Transverse colon (tissue), 4 donors: ENCODE measurements at regions of chr17 and their contacts with region 1.

Region 1: GRCh38 chr17:27506348-27507231 is 50.3 kb downstream of the KSR1 start:
- DNase-seq: no peak
- H3K4me3 ChIP-seq: no peak overlapping the region
- H3K27ac ChIP-seq: no peak overlapping the region
- H3K4me1 ChIP-seq: peaks cover 0 to 14% (median 13%) of the 10 kb centered on the region in 4 donors
- H3K27me3 ChIP-seq: no peaks in the 10 kb centered on the region
- CTCF ChIP-seq: no peak
- EP300 ChIP-seq: no peak
- POLR2A ChIP-seq: no peak

Region 2: DNA sequence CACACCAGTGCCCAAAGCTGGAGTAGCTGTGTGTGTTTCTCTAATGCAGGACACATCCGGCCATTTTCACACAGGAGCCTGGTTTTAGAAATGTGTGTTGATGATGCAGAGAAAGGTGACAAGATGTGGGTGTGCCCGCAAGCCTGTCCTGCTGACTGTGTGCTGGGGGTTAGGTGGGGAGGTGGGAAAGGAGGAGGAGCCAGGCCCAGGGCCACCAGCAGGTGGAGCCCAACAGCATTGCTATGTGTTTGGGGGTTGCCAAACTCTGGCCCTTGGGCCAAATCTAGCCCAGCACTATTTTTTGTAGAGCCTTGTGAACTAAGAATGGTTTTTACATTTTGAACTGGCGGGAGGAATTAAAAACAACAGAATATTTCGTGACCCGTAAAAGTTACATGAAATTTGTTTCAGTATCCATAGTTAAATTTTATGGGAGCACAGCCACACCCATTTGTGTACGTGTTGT is 62.7 kb after region 1 on chr17:
- in situ Hi-C with region 1: loop called in 1 of 4 experiments (anchors 10 kb)
- intact Hi-C with region 1: no loop called
- DNase-seq: no peak
- H3K4me3 ChIP-seq: no peak overlapping the region
- H3K27ac ChIP-seq: no peak overlapping the region
- H3K4me1 ChIP-seq: peaks cover 0 to 14% (median 7%) of the 10 kb centered on the region in 4 donors
- H3K27me3 ChIP-seq: no peaks in the 10 kb centered on the region
- CTCF ChIP-seq: peak in 4 of 5 experiments; percentile 17 to 38 (median 31)
- EP300 ChIP-seq: no peak
- POLR2A ChIP-seq: no peak

Region 3: DNA sequence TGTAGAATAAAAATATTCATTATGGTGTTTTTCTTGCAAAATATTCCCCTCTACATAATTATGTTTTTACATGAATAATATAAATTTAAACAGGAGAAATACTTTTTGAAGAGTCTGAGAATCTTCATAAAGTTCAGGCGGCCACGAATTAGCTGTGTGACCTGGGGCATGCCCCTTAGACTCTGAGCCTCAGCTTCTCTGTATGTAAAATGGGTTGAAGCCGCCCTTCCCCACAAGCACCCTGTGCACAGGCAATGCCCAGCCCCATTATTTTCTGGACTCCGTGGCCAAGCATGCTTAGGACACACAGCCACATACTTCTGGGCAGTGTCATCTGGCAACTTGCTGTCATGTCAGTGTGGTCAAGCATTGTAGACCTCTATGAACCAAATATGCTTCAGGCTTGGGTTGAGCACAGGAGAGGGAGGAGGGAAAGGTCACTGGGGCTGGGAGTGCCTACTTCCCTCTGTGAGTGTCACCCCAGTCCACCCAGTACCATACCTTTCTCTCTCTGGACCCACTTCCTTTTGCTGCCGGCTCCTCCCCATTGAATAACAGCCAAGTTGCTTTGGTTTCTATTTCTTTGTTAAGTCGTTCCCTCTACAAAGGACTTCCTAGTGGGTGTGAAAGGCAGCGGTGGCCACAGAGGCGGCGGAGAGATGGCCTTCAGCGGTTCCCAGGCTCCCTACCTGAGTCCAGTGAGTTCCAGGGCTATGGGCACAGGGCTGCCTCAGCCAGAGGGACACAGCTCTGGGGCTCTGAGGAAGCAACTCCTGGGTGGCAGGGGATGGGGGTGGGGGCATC is 124.2 kb after region 1 on chr17 and contains the start of gene LGALS9:
- in situ Hi-C with region 1: loop called in 1 of 4 experiments (anchors 25 kb)
- intact Hi-C with region 1: no loop called
- DNase-seq: peak; percentile 83
- H3K4me3 ChIP-seq: peak within 1 kb of the TSS; percentile 2 to 58 (median 46)
- H3K27ac ChIP-seq: peak within 1 kb of the TSS; percentile 87 to 93 (median 89)
- H3K4me1 ChIP-seq: peaks cover 24 to 48% (median 43%) of the 10 kb centered on the region in 4 donors
- H3K27me3 ChIP-seq: no peaks in the 10 kb centered on the region
- CTCF ChIP-seq: no peak
- EP300 ChIP-seq: no peak
- POLR2A ChIP-seq: peak; percentile 96
- total RNA-seq, gene LGALS9: 245 to 463 (median 368) TPM